Mammary epithelial cell (primary cell): ENCODE measurements at regions of chr2 and their contacts with region 1.

Region 1: DNA sequence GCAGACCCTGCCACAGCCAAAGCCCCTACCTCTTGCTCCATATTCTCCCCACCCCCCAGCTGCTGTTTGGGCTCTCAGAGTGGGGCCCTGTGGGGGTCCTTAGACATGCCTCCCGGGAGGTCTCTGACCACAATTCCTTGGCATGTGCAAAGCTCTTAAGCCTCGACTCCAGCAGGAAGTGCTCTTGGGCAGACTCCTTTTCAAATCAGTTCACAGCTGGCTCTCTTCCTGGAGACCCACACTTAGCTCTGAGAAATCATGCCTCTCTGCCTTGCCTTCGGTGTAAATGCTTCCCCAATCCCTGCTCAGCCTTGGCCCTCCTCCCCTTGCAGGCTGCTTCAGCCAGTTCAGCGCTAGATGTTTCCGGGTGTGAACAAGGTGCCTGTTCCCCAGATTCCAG is 46.9 kb downstream of the NGEF start:
- DNase-seq: no peak
- H3K4me3 ChIP-seq: no peak overlapping the region
- H3K27ac ChIP-seq: no peak overlapping the region
- H3K4me1 ChIP-seq: no peaks in the 10 kb centered on the region
- H3K27me3 ChIP-seq: no peaks in the 10 kb centered on the region
- CTCF ChIP-seq: no peak

Region 2: GRCh38 chr2:232511336-232511888 is 454.7 kb before region 1 on chr2:
- CTCF ChIA-PET with region 1: no interaction called
- dilution Hi-C with region 1: no loop called
- in situ Hi-C with region 1: no loop called
- intact Hi-C with region 1: no loop called
- DNase-seq: no peak
- H3K4me3 ChIP-seq: no peak overlapping the region
- H3K27ac ChIP-seq: no peak overlapping the region
- H3K4me1 ChIP-seq: no peaks in the 10 kb centered on the region
- H3K27me3 ChIP-seq: peaks cover 3% of the 10 kb centered on the region
- CTCF ChIP-seq: no peak

Region 3: GRCh38 chr2:232876078-232876977 is 89.8 kb before region 1 on chr2:
- CTCF ChIA-PET with region 1: no interaction called
- dilution Hi-C with region 1: loop called (anchors 5 kb)
- in situ Hi-C with region 1: no loop called
- intact Hi-C with region 1: no loop called
- DNase-seq: peak; percentile 14
- H3K4me3 ChIP-seq: peak overlapping the region in 2 of 3 experiments; percentile 46 to 54
- H3K27ac ChIP-seq: no peak overlapping the region
- H3K4me1 ChIP-seq: peaks cover 15% of the 10 kb centered on the region
- H3K27me3 ChIP-seq: no peaks in the 10 kb centered on the region
- CTCF ChIP-seq: peak in 1 of 2 donors; percentile 34

Region 4: GRCh38 chr2:232927793-232928550 is 38.1 kb before region 1 on chr2:
- CTCF ChIA-PET with region 1: no interaction called
- dilution Hi-C with region 1: loop called (anchors 5 kb)
- in situ Hi-C with region 1: no loop called
- intact Hi-C with region 1: no loop called
- DNase-seq: no peak
- H3K4me3 ChIP-seq: no peak overlapping the region
- H3K27ac ChIP-seq: no peak overlapping the region
- H3K4me1 ChIP-seq: peaks cover 7% of the 10 kb centered on the region
- H3K27me3 ChIP-seq: peaks cover 30% of the 10 kb centered on the region
- CTCF ChIP-seq: no peak

Region 5: DNA sequence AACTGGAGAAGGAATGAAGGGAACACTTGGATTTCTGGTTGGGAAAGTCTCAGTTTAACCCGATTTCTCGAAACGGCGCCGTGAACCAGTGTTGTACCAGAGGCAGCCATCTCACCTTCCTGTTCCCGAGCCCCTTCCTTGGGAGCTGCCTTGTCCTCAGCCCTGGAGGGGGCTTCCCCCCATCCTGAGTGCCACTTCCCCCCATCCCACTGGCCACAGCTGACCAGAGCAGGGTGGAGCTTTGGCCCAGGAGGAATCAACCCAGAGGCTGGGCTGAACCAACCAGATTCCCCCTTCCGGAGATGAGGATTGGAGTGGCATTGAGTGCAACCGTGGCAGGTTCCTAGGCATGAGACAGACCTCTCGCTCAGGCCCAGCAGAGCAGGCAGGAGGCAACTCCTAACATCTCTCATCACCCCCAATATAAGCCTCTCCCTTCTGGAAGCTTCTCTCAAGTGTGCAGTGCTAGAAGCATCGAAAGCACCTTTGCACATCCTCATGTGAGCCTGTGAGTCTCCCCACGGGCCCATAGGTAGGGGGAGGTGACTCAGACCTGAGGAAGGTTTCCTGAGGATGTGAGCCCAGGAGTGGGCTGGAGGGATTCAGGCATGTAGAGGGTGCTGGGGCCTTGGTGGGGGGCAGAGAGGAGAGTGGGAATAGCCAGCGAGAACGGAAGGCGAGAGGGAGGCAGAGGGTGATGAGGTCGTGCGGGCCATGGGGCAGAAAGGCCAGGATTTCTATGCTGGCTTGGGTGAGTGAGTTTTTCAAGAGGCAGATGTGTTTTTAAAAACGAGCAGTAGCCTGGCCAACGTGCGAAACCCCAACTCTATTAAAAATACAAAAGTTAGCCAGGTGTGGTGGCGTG is 35.0 kb after region 1 on chr2:
- CTCF ChIA-PET with region 1: no interaction called
- dilution Hi-C with region 1: loop called (anchors 5 kb)
- in situ Hi-C with region 1: no loop called
- intact Hi-C with region 1: no loop called
- DNase-seq: no peak
- H3K4me3 ChIP-seq: no peak overlapping the region
- H3K27ac ChIP-seq: no peak overlapping the region
- H3K4me1 ChIP-seq: no peaks in the 10 kb centered on the region
- H3K27me3 ChIP-seq: peaks cover 3% of the 10 kb centered on the region
- CTCF ChIP-seq: no peak

Region 6: DNA sequence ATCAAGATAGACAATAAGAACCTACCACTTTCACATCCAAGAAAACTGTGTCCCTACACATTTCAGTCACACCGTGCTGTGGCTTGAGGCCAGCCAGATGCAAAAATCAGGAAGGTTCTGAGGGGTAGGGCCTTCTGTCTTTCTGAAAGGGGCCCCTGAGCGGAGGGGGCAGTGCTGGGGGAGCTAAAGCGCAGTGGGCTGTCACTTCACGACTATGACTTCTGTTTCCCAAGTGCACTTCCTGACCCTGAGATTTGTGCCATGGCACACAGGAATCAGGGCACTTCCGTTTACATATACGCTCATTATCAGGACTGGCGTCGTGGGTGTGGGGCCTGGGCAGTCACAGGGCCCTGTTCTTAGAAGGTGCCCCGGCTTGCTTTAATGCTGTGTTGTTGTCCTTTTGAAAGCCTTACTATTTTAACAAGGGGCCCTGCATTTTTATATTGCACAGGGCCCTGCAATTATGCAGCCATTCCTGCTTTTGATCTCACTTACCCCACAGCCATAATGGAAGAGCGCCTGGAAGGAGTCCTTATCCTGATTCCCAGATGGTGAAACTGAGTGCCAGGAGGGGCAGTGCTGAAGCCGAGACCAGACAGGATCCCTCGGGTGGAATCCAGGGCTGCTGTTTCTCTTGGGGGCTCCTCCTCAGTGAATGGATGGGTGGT is 46.3 kb after region 1 on chr2:
- CTCF ChIA-PET with region 1: no interaction called
- dilution Hi-C with region 1: no loop called
- in situ Hi-C with region 1: no loop called
- intact Hi-C with region 1: loop called (anchors 1 kb)
- DNase-seq: no peak
- H3K4me3 ChIP-seq: no peak overlapping the region
- H3K27ac ChIP-seq: no peak overlapping the region
- H3K4me1 ChIP-seq: no peaks in the 10 kb centered on the region
- H3K27me3 ChIP-seq: no peaks in the 10 kb centered on the region
- CTCF ChIP-seq: no peak